ENCODE measurements at regions of chr5 and their contacts with region 1.

Region 1: GRCh38 chr5:178590141-178590923 is at the start of gene COL23A1:
- DNase-seq: peak; percentile 74 to 75
- ATAC-seq: peak; percentile 82 to 91 (median 87)
- H3K4me3 ChIP-seq: peak within 1 kb of the TSS in 9 of 10 donors; percentile 37 to 72 (median 58)
- H3K27ac ChIP-seq: peak within 1 kb of the TSS; percentile 27 to 80 (median 71)
- H3K4me1 ChIP-seq: peaks cover 3 to 36% (median 28%) of the 10 kb centered on the region in 9 donors
- H3K27me3 ChIP-seq: peaks cover 0 to 45% (median 10%) of the 10 kb centered on the region in 7 donors
- CTCF ChIP-seq: peak; percentile 42 to 82 (median 72)
- total RNA-seq, gene COL23A1: 9.8 to 29.0 (median 18.8) TPM

Region 2: DNA sequence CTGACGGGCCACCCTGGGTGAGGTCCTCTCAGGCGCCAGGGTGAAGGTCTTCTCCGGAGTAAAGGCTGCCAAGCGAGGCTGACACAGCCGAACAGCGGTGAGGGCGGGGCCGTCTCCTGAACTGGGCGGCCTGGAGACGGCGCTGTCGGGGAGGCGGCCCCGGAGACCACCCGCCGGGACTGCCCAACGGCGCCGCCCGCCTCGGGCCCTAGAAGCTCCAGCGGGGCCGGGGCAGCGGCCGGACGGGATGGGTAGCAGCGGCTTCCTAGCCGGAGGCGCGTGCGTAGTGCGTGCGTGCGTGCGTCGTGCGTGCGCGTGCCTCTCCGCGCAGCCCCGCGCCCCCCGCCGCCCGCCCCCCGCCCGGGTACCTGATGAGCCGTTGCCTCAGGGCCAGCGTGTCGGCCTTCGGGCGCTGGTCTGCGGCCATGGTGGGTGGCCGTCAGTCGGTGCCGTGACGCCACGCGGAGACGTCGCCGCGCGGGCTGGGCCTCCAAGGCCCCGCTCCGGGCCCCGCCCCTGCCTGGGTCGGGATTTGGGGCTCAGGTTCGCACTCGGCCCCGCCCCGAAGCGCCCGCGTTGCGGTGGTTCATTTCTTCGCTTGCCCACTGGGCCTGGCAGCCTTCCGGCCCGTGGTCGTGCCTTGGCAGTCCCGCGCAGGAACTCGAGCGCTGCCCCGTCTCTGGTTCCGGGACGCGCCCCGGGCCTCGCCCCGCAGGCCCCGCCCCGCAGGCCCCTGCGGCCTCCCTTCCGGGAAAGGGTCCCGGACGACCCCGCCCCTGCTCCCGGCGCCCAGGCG is 358.0 kb before region 1 on chr5 and contains the start of gene PHYKPL:
- intact Hi-C with region 1: loop called in 1 of 10 experiments (anchors 2 kb)
- DNase-seq: peak; percentile 59 to 80
- ATAC-seq: peak; percentile 57 to 84 (median 70)
- H3K4me3 ChIP-seq: peak within 1 kb of the TSS; percentile 76 to 95 (median 91)
- H3K27ac ChIP-seq: peak within 1 kb of the TSS; percentile 84 to 100 (median 98)
- H3K4me1 ChIP-seq: peaks cover 20 to 72% (median 38%) of the 10 kb centered on the region in 9 donors
- H3K27me3 ChIP-seq: no peaks in the 10 kb centered on the region
- CTCF ChIP-seq: peak in 3 of 9 donors; percentile 22 to 34 (median 34)
- total RNA-seq, gene PHYKPL: 30.5 to 50.6 (median 37.3) TPM

Region 3: DNA sequence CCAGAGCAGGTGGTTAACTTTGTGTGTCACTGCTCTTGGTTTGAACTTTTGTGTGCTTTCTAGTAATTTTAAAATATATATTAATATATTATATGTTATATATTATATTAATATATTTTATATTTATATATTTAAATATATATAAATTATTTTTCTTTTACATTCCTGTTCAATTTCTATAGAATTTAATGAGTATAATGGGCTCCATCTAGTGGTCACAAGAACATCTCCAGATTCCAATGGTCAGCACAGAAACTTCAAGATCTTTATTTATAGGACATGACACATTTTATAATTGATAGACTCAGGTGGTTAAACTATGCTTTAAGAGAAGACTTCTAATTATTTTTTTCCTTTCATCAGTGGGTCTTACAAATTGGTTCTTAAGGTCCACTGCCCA is 39.3 kb before region 1 on chr5:
- intact Hi-C with region 1: loop called in 1 of 10 experiments (anchors 2 kb)
- DNase-seq: no peak
- ATAC-seq: no peak
- H3K4me3 ChIP-seq: no peak overlapping the region
- H3K27ac ChIP-seq: no peak overlapping the region
- H3K4me1 ChIP-seq: peaks cover 4 to 21% (median 11%) of the 10 kb centered on the region in 9 donors
- H3K27me3 ChIP-seq: peaks cover 0 to 9% (median 0%) of the 10 kb centered on the region in 7 donors
- CTCF ChIP-seq: peak in 8 of 9 donors; percentile 27 to 74 (median 60)